Vagina (tissue), 2 donors: ENCODE measurements at regions of chr13 and their contacts with region 1.

Region 1: GRCh38 chr13:44917589-44918325 is 71.5 kb downstream of the NUFIP1 start:
- DNase-seq: peak in 1 of 2 donors; percentile 99
- H3K4me3 ChIP-seq: peak overlapping the region; percentile 50 to 63
- H3K27ac ChIP-seq: peak overlapping the region; percentile 98
- H3K4me1 ChIP-seq: peaks cover 26% of the 10 kb centered on the region
- H3K27me3 ChIP-seq: no peaks in the 10 kb centered on the region
- CTCF ChIP-seq: peak in 1 of 3 experiments; percentile 81
- POLR2A ChIP-seq: peak in 1 of 2 donors; percentile 59

Region 2: DNA sequence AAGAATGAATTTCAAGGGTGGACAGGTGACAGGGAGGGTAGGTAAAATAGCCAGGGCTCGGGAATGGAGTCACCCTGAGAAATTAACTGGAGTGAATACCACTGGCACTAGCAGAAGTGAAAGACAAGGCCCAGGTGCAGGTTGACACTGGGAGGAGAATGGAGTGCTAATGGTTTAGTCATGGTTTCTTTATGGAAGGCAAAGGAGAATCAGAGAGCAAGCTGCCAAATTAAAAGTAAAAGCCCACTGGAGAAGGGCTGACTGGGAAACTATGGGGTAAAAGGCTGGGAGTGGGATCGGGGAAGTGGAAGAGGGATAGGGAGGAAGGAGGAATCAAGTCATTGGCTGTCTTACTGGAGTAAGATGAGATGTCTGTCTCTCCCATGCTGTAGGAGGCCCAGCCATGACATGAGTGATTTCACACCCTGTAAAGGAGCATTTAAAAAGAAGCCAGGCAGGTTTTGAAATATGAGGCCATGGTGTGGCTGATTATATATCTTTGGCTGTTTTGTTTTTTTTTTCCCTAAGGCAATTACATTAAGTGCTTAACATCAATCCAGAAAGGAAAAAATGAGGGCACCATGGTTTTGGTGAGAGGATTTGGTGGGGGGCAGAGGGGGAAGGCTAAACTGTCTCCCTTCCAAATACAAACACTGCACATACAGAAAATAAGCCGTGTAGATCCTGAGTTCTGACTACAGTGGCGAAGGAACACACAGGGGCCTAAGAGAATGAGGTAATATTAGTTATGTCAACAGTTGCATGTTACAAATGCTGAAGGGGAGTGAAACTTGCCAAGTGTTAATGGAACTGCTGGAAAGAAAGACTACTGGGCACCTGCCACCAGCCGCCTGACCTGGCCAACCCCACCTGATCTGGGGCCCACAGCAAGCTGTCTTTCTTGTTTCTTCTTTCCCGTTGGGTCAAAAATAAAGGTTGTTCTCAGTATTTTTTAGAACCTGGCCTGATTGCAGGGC is 158.1 kb before region 1 on chr13:
- intact Hi-C with region 1: loop called (anchors 10 kb)
- DNase-seq: no peak
- H3K4me3 ChIP-seq: no peak overlapping the region
- H3K27ac ChIP-seq: peak overlapping the region; percentile 73
- H3K4me1 ChIP-seq: peaks cover 17% of the 10 kb centered on the region
- H3K27me3 ChIP-seq: no peaks in the 10 kb centered on the region
- CTCF ChIP-seq: no peak
- POLR2A ChIP-seq: no peak